ENCODE measurements at regions of chr17 and their contacts with region 1.

Region 1: DNA sequence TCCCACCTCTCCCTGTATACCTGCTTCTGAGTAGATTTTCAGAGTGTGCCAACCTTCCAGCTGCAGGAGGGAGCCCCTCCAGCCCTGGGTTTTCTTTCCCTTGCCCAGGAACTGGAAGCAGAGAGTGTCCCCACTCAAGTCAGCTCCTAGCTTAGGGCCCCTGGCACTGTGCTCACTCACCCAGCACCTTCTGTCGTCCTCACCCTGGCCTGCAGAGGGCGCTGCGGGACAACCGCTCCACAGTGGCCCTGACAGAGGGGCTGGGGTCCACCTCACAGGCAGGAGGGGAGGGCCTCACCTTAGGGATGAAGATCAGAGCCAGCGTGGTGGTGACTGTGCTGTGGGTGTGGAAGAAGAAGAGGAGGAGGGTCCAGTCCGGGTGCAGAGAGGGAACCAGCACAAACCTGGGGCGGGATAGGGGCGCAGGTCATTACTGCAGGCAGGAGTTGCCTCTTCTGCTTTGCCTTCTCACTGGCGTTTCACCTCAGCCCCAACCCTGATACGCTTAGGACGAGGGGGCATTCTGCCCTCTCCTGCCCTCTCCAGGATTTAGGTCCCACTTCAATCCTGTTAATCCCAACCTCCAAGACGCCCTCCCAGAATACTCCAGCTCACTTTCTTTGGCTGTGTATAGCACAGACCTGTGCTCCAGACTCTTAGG is 10.0 kb downstream of the GPR179 start:
- DNase-seq: peak; percentile 96
- ATAC-seq: peak; percentile 92
- H3K4me3 Mint-ChIP-seq: no peak overlapping the region
- H3K27ac Mint-ChIP-seq: no peak overlapping the region; the same call in 1 of the 2 replicates
- H3K4me1 Mint-ChIP-seq: peaks cover 16% of the 10 kb centered on the region
- H3K27me3 Mint-ChIP-seq: no peaks in the 10 kb centered on the region; the same call in 1 of the 2 replicates
- CTCF ChIP-seq: peak; percentile 95

Region 2: DNA sequence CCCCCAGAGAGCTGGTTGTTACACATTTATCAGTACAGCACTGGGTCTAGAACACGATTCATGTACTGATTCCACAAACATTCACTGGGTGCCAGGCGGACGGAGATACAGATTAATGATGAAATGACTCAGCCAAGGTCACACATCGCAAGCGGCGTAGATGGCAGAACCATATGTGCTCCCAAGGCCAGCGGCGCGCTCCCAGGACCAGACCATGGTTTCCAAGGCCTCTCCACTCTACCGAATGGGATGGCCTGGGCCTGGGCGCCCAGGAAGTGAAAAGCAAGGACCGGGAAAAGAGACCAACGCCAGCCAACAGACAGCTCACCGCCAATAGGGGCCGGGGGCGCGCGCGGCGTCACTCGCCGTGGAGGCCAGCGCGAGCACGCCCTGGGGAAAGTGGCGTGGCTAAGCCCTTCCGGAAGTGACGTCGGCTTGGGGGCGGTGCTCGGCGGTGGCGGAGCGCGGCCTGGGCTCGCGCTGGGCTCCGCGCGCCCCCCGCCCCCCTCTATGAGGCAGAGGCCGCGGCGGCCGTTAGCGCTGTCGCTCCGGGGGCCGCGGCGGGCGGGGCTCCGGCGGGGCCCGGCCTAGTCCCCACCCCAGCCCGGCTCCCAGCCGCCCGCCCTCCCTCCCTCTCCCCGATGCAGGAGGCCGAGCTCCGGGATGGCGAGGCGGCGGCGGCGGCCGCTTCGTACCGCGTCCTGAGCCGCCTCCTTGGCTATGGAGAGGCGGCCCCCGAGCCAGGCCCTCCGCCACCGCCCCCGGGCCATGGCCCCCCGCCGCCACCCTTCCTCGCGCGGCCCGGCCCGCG is 17.9 kb after region 1 on chr17 and contains the start of gene SOCS7:
- CTCF ChIA-PET with region 1: interaction called, 221 read pairs
- POLR2A ChIA-PET with region 1: no interaction called
- DNase-seq: peak; percentile 90
- ATAC-seq: peak; percentile 81
- H3K4me3 Mint-ChIP-seq: peak within 1 kb of the TSS; percentile 79
- H3K27ac Mint-ChIP-seq: peak within 1 kb of the TSS; percentile 98
- H3K4me1 Mint-ChIP-seq: peaks cover 48% of the 10 kb centered on the region
- H3K27me3 Mint-ChIP-seq: no peaks in the 10 kb centered on the region; the same call in 1 of the 2 replicates
- CTCF ChIP-seq: no peak
- total RNA-seq, gene SOCS7: 32.3 to 34.4 TPM (median 33.6 TPM) in 3 replicates

Region 3: GRCh38 chr17:38379438-38379837 is 45.7 kb after region 1 on chr17:
- CTCF ChIA-PET with region 1: interaction called, 12 read pairs
- POLR2A ChIA-PET with region 1: no interaction called
- DNase-seq: no peak
- ATAC-seq: no peak
- H3K4me3 Mint-ChIP-seq: no peak overlapping the region
- H3K27ac Mint-ChIP-seq: no peak overlapping the region
- H3K4me1 Mint-ChIP-seq: no peaks in the 10 kb centered on the region
- H3K27me3 Mint-ChIP-seq: no peaks in the 10 kb centered on the region
- CTCF ChIP-seq: no peak

Region 4: DNA sequence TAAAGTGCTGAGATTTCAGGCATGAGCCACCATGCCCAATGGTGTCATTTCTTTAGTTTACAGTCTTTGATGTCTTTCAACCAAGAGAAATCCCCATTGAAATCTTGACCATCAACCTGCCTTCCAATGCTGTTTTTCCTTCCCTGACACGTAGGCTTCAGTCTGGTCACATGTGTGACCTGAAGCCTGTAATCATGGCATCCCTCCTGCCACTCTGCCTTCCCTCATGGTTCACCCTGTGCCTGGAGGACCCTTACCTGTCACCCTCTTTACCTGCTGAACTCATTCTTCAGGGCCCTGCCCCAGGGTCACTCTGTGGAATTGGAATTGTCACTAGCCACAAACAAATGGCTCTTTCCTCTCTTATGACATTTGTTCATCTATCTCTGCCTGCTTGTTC is 76.4 kb after region 1 on chr17:
- CTCF ChIA-PET with region 1: interaction called, 126 read pairs
- POLR2A ChIA-PET with region 1: interaction called, 19 read pairs
- DNase-seq: no peak
- ATAC-seq: no peak
- H3K4me3 Mint-ChIP-seq: no peak overlapping the region
- H3K27ac Mint-ChIP-seq: no peak overlapping the region
- H3K4me1 Mint-ChIP-seq: peaks cover 30% of the 10 kb centered on the region
- H3K27me3 Mint-ChIP-seq: no peaks in the 10 kb centered on the region; the same call in 1 of the 2 replicates
- CTCF ChIP-seq: no peak

Region 5: GRCh38 chr17:38421171-38421841 is 87.5 kb after region 1 on chr17:
- CTCF ChIA-PET with region 1: interaction called, 14 read pairs
- POLR2A ChIA-PET with region 1: interaction called, 19 read pairs
- DNase-seq: no peak
- ATAC-seq: no peak; the same call in 1 of the 2 replicates
- H3K4me3 Mint-ChIP-seq: peak overlapping the region; percentile 22
- H3K27ac Mint-ChIP-seq: no peak overlapping the region
- H3K4me1 Mint-ChIP-seq: peaks cover 70% of the 10 kb centered on the region
- H3K27me3 Mint-ChIP-seq: peaks cover 38% of the 10 kb centered on the region
- CTCF ChIP-seq: no peak

Region 6: DNA sequence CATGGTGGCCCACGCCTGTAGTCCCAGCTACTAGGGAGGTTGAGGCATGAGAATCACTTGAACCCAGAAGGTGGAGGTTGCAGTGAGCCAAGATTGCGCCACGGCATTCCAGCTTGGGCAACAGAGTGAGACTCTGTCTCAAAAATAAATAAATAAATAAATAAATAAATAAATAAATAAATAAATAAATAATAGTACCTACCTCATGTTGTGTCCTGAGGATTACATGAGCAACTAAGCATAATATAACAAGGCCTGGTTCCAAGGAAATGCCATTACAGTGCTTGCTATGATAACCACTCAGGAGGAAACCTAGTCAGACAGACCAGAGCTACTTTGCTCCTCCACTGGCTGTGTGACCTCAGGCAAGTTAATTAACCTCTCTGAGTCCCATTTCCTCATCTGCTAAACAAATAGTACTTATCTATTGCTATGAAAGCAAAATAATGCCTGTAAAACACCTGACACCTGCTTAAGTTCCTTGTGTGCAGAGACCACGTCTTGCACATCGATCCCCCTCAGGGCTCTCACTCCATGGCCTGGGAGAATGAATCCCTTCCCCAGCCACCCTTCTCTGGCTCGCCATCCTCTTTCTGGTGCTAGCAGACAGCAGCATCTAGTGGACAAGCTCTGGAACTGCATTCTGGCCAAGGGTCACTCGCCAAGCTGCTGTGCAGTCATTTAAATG is 333.5 kb after region 1 on chr17:
- CTCF ChIA-PET with region 1: interaction called, 10 read pairs
- POLR2A ChIA-PET with region 1: no interaction called
- DNase-seq: peak; percentile 82
- ATAC-seq: peak; percentile 12; the same call in 1 of the 2 replicates
- H3K4me3 Mint-ChIP-seq: no peak overlapping the region
- H3K27ac Mint-ChIP-seq: no peak overlapping the region
- H3K4me1 Mint-ChIP-seq: peaks cover 52% of the 10 kb centered on the region
- H3K27me3 Mint-ChIP-seq: peaks cover 60% of the 10 kb centered on the region
- CTCF ChIP-seq: peak; percentile 96